ENCODE measurements at regions of chr9 and their contacts with region 1.

Region 1: GRCh38 chr9:76810377-76810957 is 46.2 kb downstream of the PCA3 start:
- DNase-seq: no peak
- H3K4me3 ChIP-seq: no peak overlapping the region
- H3K27ac ChIP-seq: peak overlapping the region in 1 of 2 donors; percentile 5
- H3K4me1 ChIP-seq: peaks cover 0 to 13% of the 10 kb centered on the region in 2 donors
- H3K27me3 ChIP-seq: no peaks in the 10 kb centered on the region
- CTCF ChIP-seq: peak; percentile 60 to 68 (median 60)

Region 2: GRCh38 chr9:76658535-76659231 is 151.8 kb before region 1 on chr9:
- intact Hi-C with region 1: loop called (anchors 10 kb)
- DNase-seq: no peak
- H3K4me3 ChIP-seq: no peak overlapping the region
- H3K27ac ChIP-seq: peak overlapping the region; percentile 5 to 6
- H3K4me1 ChIP-seq: peaks cover 0 to 30% of the 10 kb centered on the region in 2 donors
- H3K27me3 ChIP-seq: no peaks in the 10 kb centered on the region
- CTCF ChIP-seq: peak in 2 of 3 experiments; percentile 19 to 38